ENCODE measurements at regions of chr20 and their contacts with region 1.

Region 1: GRCh38 chr20:3927486-3928291 is 38.5 kb downstream of the PANK2 start:
- DNase-seq: peak; percentile 77
- H3K4me3 Mint-ChIP-seq: peak overlapping the region; percentile 8
- H3K27ac Mint-ChIP-seq: peak overlapping the region; percentile 80
- H3K4me1 Mint-ChIP-seq: peaks cover 57% of the 10 kb centered on the region
- H3K27me3 Mint-ChIP-seq: no peaks in the 10 kb centered on the region
- CTCF ChIP-seq: no peak

Region 2: GRCh38 chr20:3753098-3753980 is 174.3 kb before region 1 on chr20:
- CTCF ChIA-PET with region 1: no interaction called
- POLR2A ChIA-PET with region 1: no interaction called
- intact Hi-C with region 1: no loop called
- DNase-seq: peak; percentile 72
- H3K4me3 Mint-ChIP-seq: no peak overlapping the region
- H3K27ac Mint-ChIP-seq: no peak overlapping the region
- H3K4me1 Mint-ChIP-seq: no peaks in the 10 kb centered on the region
- H3K27me3 Mint-ChIP-seq: no peaks in the 10 kb centered on the region
- CTCF ChIP-seq: peak; percentile 78

Region 3: DNA sequence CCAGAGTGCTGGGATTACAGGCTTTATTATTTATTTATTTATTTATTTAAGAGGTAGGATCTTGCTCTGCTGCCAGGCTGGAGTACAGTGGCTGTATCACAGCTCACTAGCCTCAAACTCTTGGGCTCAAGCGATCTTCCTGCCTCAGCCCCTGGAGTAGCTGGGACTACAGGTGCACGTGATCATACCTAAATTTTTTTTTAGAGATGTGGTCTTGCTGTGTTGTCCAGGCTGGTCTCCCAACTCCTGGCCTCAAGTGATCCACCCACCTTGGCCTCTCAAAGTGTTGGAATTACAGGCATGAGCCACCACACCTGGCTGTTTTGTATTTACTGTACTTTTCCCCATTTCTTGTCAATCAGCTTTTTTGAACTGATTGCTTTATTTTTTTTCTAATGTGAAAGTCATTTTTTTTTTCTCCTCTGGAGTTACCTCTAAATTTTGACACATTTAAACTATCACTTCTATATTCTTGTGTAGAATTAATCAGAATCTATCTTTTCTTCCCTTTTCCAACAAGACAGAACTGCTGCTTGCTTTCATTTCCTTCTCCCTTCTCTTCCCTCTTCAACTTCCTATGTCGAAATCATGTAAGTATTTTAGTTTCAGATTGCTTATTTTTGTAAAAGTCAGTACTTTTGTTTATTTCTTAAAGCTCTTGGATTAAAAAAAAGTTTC is 26.5 kb before region 1 on chr20:
- CTCF ChIA-PET with region 1: interaction called, 3 read pairs
- POLR2A ChIA-PET with region 1: interaction called, 11 read pairs
- intact Hi-C with region 1: no loop called
- DNase-seq: no peak
- H3K4me3 Mint-ChIP-seq: no peak overlapping the region
- H3K27ac Mint-ChIP-seq: peak overlapping the region; percentile 74
- H3K4me1 Mint-ChIP-seq: peaks cover 39% of the 10 kb centered on the region
- H3K27me3 Mint-ChIP-seq: no peaks in the 10 kb centered on the region
- CTCF ChIP-seq: no peak